ENCODE measurements at regions of chr22 and their contacts with region 1.

Region 1: DNA sequence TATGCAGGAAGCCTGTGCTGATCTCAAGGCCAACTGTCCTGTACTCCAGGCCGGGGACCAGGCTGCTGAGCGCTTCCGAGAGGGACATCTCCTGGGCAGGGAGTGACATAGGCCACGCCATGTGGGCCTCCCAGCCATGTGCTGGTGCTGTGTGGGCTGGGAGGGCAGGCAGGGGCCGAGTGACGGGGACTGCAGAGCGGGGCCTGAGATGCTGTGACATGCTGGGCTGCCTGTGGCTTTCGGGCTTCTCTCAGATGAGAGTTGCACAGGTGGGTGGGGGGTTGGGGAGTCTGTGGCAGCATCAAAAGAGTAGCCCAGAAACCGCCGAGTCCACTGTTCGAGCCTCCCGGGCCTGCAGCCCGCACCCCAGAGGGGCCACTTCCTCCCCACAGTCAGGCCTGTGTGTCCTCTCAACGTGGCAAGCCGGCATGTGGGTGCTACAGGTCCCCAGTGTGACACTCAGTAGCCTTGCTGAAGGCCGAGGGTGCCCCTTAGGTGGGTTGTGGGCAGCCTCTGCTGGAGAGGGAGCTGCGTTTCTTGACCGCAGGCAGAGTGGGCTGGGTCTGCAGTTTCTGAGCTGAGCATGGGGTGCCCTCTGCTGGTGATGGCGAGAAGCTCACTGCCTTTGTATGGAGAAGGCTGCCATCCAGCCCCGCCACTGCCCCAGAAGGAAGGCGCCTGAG is 101.2 kb downstream of the BCR start:
- DNase-seq: peak; percentile 86 to 93
- H3K4me3 ChIP-seq: peak overlapping the region; percentile 16 to 25
- H3K27ac ChIP-seq: peak overlapping the region; percentile 88 to 91
- H3K4me1 ChIP-seq: peaks cover 3 to 61% (median 48%) of the 10 kb centered on the region in 4 donors
- H3K27me3 ChIP-seq: no peaks in the 10 kb centered on the region
- CTCF ChIP-seq: peak; percentile 92 to 99

Region 2: DNA sequence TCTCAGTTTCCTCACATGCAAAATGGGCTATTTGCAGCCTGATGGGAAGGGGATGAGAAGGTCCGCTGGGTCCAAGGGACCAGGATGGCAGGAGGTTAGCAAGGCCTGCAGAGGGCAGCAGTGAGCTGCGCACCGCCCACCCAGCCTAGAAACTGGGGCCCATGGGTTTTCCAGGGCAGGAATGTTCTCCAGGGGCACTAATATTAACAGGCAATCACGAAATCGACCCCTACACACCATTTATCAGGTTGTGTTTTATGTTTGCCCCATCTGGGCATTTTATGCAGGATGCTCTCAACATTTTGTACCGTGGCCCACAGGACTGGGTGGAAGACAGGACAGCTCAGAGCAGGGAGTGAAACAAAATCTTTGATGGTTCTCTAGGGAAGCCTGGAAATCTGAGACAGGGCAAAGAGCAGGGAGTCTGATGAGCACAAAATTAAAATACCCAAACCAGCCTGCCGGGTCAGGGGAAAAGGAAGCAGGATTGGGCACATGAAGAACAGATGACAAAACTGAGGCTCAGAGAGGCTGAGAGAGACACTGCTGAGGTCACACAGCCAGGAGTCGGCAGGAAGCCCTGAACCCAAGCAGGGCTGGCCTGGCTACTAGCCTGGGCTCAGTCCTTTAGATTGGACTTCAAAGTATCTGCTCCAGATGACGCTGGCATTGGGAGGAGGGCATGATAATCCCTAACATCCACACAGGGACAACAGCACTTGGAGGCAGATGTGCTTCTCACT is 102.9 kb before region 1 on chr22:
- intact Hi-C with region 1: loop called (anchors 1 kb)
- DNase-seq: peak in 1 of 2 donors; percentile 81
- H3K4me3 ChIP-seq: no peak overlapping the region
- H3K27ac ChIP-seq: peak overlapping the region; percentile 94 to 96
- H3K4me1 ChIP-seq: peaks cover 0 to 50% (median 38%) of the 10 kb centered on the region in 4 donors
- H3K27me3 ChIP-seq: no peaks in the 10 kb centered on the region
- CTCF ChIP-seq: peak; percentile 98

Region 3: GRCh38 chr22:23192181-23192957 is 89.2 kb before region 1 on chr22:
- intact Hi-C with region 1: no loop called
- DNase-seq: no peak
- H3K4me3 ChIP-seq: no peak overlapping the region
- H3K27ac ChIP-seq: no peak overlapping the region
- H3K4me1 ChIP-seq: peaks cover 0 to 78% (median 29%) of the 10 kb centered on the region in 4 donors
- H3K27me3 ChIP-seq: no peaks in the 10 kb centered on the region
- CTCF ChIP-seq: no peak